Caco-2 (cell line): ENCODE measurements at regions of chr2 and their contacts with region 1.

Region 1: DNA sequence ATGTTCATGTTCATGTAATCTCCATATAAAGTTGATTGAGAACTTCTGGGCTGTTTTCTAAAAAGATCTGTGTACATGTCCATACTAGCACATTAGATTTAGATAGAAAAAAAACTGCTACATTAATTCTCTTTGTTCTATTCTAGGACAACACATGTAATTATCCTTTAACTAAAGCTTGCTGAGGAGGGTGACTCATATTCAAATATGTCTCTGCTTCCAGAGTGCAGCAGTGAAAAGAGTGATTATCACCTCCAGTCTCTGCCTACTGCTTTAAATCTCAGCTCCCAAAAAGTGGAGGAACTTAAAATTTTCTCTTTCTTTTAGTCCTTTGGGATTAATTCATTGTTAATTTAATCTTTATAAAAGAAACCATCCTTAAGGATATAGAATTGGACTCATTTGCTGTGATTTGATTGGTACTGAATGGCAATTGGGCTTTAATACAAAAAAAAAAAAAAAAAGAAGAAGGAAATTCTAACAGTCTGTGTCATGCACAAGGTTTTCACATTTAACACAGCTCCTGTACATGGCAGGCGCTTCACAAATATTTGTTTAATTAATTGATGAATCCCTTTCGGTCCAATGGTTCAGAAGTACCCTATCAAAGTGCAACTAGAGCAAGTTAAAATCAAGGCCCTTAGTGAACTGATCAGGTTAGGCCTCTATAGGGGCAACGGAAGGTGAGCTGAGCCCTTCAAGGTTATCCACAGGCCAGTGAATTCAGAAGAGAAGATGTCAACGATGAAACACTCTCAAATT is 214.0 kb upstream of the KCNJ3 start:
- DNase-seq: no peak
- H3K4me3 ChIP-seq: no peak overlapping the region
- H3K4me3 Mint-ChIP-seq: no peak overlapping the region
- H3K27ac Mint-ChIP-seq: no peak overlapping the region
- H3K4me1 ChIP-seq: peaks cover 6% of the 10 kb centered on the region; the same call in 1 of the 2 replicates
- H3K4me1 Mint-ChIP-seq: no peaks in the 10 kb centered on the region
- H3K27me3 ChIP-seq: no peaks in the 10 kb centered on the region
- H3K27me3 Mint-ChIP-seq: no peaks in the 10 kb centered on the region
- CTCF ChIP-seq: no peak

Region 2: DNA sequence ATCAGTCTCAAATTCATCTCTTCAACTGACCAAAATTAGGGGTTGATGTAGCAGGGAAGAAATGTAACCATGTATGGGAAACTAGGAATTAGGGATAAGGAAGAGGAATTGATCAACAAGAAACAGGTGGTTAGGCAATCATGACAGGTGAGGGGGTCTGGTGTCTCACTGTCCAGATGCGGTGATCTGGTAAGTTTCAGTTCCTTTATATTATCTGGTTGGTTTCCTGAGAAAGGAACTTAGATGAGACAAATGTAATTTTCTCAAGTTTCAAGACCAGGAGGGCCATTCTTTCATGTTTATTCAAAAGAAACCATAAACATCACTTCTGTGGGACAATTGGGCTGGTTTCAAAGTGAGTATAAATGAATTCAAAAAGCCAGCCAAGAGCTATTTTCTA is 92.3 kb before region 1 on chr2:
- CTCF ChIA-PET with region 1: no interaction called
- POLR2A ChIA-PET with region 1: no interaction called
- intact Hi-C with region 1: no loop called
- DNase-seq: no peak
- H3K4me3 ChIP-seq: no peak overlapping the region
- H3K4me3 Mint-ChIP-seq: no peak overlapping the region
- H3K27ac Mint-ChIP-seq: no peak overlapping the region
- H3K4me1 ChIP-seq: no peaks in the 10 kb centered on the region
- H3K4me1 Mint-ChIP-seq: no peaks in the 10 kb centered on the region
- H3K27me3 ChIP-seq: no peaks in the 10 kb centered on the region
- H3K27me3 Mint-ChIP-seq: peaks cover 4% of the 10 kb centered on the region
- CTCF ChIP-seq: no peak

Region 3: GRCh38 chr2:154447727-154448418 is 36.6 kb before region 1 on chr2:
- CTCF ChIA-PET with region 1: no interaction called
- POLR2A ChIA-PET with region 1: no interaction called
- intact Hi-C with region 1: loop called (anchors 5 kb)
- DNase-seq: peak in 1 of 2 experiments; percentile 18
- H3K4me3 ChIP-seq: no peak overlapping the region
- H3K4me3 Mint-ChIP-seq: no peak overlapping the region
- H3K27ac Mint-ChIP-seq: no peak overlapping the region
- H3K4me1 ChIP-seq: peaks cover 42% of the 10 kb centered on the region
- H3K4me1 Mint-ChIP-seq: peaks cover 17% of the 10 kb centered on the region
- H3K27me3 ChIP-seq: no peaks in the 10 kb centered on the region
- H3K27me3 Mint-ChIP-seq: no peaks in the 10 kb centered on the region
- CTCF ChIP-seq: no peak